CD4-positive, alpha-beta T cell (primary cell): ENCODE measurements at regions of chr7 and their contacts with region 1.

Region 1: DNA sequence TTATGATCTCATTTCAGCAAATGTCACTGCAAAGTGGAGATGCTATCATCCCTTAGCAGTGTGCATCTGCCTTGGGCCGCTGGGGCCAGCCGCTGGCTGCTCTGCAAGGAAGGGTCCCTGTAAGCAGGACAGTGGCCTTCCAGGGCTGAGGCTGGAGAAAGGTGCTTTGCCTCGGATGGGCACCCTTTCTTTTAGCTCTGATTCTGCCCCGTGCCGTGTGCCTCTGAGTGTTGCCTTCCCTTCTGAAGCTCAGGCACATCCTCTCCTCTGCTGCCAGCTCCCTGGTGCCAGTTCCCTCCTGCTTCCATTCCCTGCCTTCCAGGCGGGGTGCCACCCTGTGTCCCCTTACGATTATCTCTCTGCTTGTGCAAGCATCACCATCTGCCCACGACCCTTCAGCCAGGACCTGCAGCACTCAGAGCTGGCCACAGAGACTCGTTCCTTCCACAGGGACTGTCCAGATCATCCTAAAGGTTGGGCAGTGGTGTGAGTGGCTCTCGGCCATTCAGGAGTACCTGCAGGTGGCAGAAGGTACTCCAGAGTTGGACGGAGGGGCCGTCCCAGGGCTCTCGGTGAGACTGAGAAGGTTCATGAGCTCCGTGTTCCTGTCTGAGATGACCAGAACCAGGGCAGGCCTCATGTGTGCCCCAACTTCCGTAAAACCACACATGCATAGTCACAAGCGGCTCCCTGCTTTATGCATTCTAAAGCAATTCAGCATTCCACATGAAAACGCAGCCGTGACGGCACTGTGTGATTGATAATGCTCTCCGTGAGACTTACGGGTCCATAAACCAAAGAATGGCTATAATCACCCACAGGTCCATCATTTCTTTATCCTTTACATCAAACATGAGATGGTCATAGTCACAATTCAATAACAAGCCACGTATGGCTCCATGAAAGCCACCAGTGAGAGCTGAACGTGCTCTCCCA is 371.4 kb downstream of the DNAJB6 start:
- DNase-seq: peak in 1 of 14 experiments; percentile 16
- ATAC-seq: no peak
- H3K4me3 ChIP-seq: no peak overlapping the region
- H3K4me3 Mint-ChIP-seq: no peak overlapping the region
- H3K27ac ChIP-seq: no peak overlapping the region
- H3K27ac Mint-ChIP-seq: no peak overlapping the region
- H3K4me1 ChIP-seq: no peaks in the 10 kb centered on the region
- H3K4me1 Mint-ChIP-seq: no peaks in the 10 kb centered on the region
- H3K27me3 ChIP-seq: peaks cover 5 to 10% of the 10 kb centered on the region in 2 experiments
- H3K27me3 Mint-ChIP-seq: peaks cover 35% of the 10 kb centered on the region
- CTCF ChIP-seq: no peak

Region 2: GRCh38 chr7:157643525-157643970 is 64.7 kb before region 1 on chr7:
- CTCF ChIA-PET with region 1: no interaction called
- POLR2A ChIA-PET with region 1: no interaction called
- intact Hi-C with region 1: loop called in 1 of 2 experiments (anchors 5 kb)
- DNase-seq: peak in 1 of 14 experiments; percentile 4
- ATAC-seq: no peak
- H3K4me3 ChIP-seq: no peak overlapping the region
- H3K4me3 Mint-ChIP-seq: no peak overlapping the region
- H3K27ac ChIP-seq: no peak overlapping the region
- H3K27ac Mint-ChIP-seq: no peak overlapping the region
- H3K4me1 ChIP-seq: no peaks in the 10 kb centered on the region
- H3K4me1 Mint-ChIP-seq: no peaks in the 10 kb centered on the region
- H3K27me3 ChIP-seq: no peaks in the 10 kb centered on the region
- H3K27me3 Mint-ChIP-seq: peaks cover 4% of the 10 kb centered on the region
- CTCF ChIP-seq: no peak

Region 3: DNA sequence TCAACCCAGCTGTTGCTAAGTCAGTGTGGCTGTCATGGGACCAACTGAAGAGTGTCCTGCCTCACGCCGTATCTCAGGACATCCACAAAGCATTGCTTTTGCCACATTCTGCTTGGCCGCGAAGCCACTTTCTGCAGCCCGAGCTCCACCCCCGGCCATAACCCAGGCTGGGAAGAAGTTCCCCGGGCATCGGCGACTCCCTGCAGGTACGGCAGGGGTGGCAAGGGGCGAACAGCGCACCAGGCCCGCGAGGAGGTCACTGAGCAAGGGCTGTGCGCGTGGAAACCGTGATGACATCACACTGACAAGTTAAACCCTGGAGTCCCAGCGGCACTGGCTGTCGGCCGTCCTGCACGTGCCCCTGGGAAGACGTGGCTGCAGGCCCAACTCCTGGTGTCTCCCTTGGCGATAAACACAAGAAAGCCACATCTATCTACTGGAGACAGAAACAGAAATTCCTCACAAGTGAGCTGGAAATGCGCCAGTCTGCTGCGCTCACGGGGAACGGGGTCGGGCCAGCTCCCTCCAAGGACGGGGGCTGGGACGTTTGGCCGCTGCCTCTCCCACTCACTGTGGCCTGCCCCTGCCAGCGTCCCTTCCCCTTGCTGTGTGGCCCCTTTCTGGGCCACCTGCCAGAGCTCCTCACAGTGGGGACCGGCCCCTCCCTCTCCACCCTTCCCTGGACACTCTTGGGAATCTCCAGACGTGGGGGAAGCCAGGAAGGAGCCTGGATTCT is 45.1 kb before region 1 on chr7:
- CTCF ChIA-PET with region 1: no interaction called
- POLR2A ChIA-PET with region 1: no interaction called
- intact Hi-C with region 1: no loop called
- DNase-seq: no peak
- ATAC-seq: no peak
- H3K4me3 ChIP-seq: no peak overlapping the region
- H3K4me3 Mint-ChIP-seq: no peak overlapping the region
- H3K27ac ChIP-seq: no peak overlapping the region
- H3K27ac Mint-ChIP-seq: no peak overlapping the region
- H3K4me1 ChIP-seq: peaks cover 9% of the 10 kb centered on the region
- H3K4me1 Mint-ChIP-seq: peaks cover 14% of the 10 kb centered on the region
- H3K27me3 ChIP-seq: no peaks in the 10 kb centered on the region
- H3K27me3 Mint-ChIP-seq: no peaks in the 10 kb centered on the region
- CTCF ChIP-seq: no peak

Region 4: GRCh38 chr7:157897681-157898080 is 189.4 kb after region 1 on chr7:
- CTCF ChIA-PET with region 1: no interaction called
- POLR2A ChIA-PET with region 1: no interaction called
- intact Hi-C with region 1: no loop called
- DNase-seq: no peak
- ATAC-seq: no peak
- H3K4me3 ChIP-seq: no peak overlapping the region
- H3K4me3 Mint-ChIP-seq: no peak overlapping the region
- H3K27ac ChIP-seq: no peak overlapping the region
- H3K27ac Mint-ChIP-seq: no peak overlapping the region
- H3K4me1 ChIP-seq: no peaks in the 10 kb centered on the region
- H3K4me1 Mint-ChIP-seq: no peaks in the 10 kb centered on the region
- H3K27me3 ChIP-seq: peaks cover 0 to 2% of the 10 kb centered on the region in 2 experiments
- H3K27me3 Mint-ChIP-seq: no peaks in the 10 kb centered on the region
- CTCF ChIP-seq: no peak